ENCODE measurements at regions of chr9 and their contacts with region 1.

Region 1: GRCh38 chr9:27726244-27727081 is 153.2 kb upstream of the C9orf72 start:
- DNase-seq: peak; percentile 75
- H3K4me3 Mint-ChIP-seq: no peak overlapping the region
- H3K27ac Mint-ChIP-seq: no peak overlapping the region
- H3K4me1 Mint-ChIP-seq: no peaks in the 10 kb centered on the region
- H3K27me3 Mint-ChIP-seq: peaks cover 9% of the 10 kb centered on the region

Region 2: DNA sequence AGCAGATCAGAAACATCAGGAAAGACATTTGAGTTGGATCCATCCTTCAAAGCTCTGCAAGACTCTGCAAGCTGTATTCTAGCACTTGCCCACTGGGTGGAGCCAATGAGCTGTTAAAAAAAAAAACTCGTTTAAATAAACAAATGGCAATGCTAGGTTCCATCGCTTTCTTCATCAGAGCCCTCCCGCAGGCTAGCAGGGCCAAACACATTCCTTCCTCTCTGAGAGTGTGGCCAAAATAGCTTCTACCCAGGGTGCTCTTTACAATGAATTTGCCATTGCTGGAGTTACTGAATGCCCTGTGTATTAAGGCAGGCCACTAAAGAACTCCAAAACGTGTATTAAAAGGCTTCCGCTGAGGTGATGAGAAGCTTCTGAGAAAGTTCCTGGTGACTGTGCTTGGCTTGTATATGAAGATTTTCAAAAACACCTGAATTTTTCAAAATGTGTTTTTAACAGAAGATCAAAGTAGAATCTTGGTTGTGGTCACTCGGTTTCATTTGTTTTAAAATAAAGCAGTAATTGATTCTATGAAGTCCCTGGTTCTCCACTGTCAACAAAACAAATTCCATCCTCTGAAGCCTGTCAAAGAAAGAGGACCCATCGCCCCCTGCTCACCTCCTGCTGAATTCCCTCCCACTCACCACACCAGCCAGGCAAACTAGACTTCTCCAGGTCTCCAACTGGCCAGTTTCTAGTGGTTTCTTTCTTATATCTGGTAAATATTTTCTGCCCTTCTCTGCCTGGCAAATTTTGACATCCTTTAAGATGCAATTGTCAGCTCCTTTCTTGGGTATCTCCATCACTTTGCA is 393.0 kb before region 1 on chr9:
- CTCF ChIA-PET with region 1: no interaction called
- intact Hi-C with region 1: loop called (anchors 5 kb)
- DNase-seq: peak; percentile 65
- H3K4me3 Mint-ChIP-seq: no peak overlapping the region
- H3K27ac Mint-ChIP-seq: no peak overlapping the region
- H3K4me1 Mint-ChIP-seq: peaks cover 6% of the 10 kb centered on the region
- H3K27me3 Mint-ChIP-seq: peaks cover 2% of the 10 kb centered on the region

Region 3: GRCh38 chr9:27785714-27786100 is 59.2 kb after region 1 on chr9:
- CTCF ChIA-PET with region 1: no interaction called
- intact Hi-C with region 1: loop called (anchors 5 kb)
- DNase-seq: no peak
- H3K4me3 Mint-ChIP-seq: no peak overlapping the region
- H3K27ac Mint-ChIP-seq: no peak overlapping the region
- H3K4me1 Mint-ChIP-seq: peaks cover 9% of the 10 kb centered on the region
- H3K27me3 Mint-ChIP-seq: peaks cover 17% of the 10 kb centered on the region

Region 4: DNA sequence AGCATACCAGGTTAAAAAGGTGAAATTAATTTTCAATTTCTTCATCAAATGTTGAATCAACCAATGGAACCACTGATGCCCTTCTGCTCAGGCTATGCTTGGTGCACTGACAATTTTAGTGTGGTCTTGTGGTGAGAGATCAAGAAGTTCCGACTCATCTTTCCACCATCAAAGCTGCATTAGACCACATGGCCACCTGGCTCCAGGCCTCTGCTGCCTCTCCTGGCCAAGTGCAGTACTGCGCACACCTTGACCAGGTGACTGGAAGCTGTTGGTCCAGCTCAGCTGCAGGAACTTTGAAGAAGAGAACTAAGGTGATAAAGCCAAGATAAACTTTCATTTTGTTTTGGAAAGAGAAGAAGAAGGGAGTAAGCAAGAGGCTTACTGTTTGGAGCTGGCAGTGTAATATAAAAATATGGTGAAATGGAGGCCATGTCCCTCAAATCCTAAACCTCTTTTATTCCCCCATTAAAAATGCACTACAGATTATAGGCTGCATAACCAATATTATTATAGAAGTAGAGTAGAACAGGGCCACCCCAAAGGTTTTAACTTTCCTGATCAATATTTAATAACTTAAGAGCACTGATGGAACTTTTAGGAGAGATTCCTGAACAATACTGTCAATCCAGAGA is 162.3 kb after region 1 on chr9:
- CTCF ChIA-PET with region 1: no interaction called
- intact Hi-C with region 1: loop called (anchors 1 kb)
- DNase-seq: peak; percentile 63
- H3K4me3 Mint-ChIP-seq: no peak overlapping the region
- H3K27ac Mint-ChIP-seq: no peak overlapping the region
- H3K4me1 Mint-ChIP-seq: no peaks in the 10 kb centered on the region
- H3K27me3 Mint-ChIP-seq: no peaks in the 10 kb centered on the region

Region 5: DNA sequence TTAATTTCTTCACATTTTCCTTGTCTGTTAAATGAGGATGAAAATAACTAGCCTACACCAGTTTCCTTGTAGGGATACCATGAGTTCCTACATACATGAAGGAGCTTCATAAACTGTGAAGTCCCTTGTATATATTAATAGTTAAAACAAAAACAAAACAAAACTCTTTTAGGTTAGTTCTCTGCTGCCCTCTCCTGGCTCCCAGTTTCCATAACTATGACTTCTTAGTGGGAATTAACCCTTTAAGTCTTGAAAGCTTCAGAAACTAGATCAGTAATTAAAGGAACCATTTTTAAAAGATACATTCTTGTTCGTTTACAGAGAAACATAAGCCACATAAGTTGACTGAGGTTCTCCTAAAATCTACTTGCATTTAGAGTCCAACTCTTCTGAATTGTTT is 346.8 kb after region 1 on chr9:
- CTCF ChIA-PET with region 1: no interaction called
- intact Hi-C with region 1: loop called (anchors 1 kb)
- DNase-seq: peak; percentile 12
- H3K4me3 Mint-ChIP-seq: no peak overlapping the region
- H3K27ac Mint-ChIP-seq: no peak overlapping the region
- H3K4me1 Mint-ChIP-seq: no peaks in the 10 kb centered on the region
- H3K27me3 Mint-ChIP-seq: no peaks in the 10 kb centered on the region